Ovary (tissue), 10 donors: ENCODE measurements at regions of chr1 and their contacts with region 1.

Region 1: DNA sequence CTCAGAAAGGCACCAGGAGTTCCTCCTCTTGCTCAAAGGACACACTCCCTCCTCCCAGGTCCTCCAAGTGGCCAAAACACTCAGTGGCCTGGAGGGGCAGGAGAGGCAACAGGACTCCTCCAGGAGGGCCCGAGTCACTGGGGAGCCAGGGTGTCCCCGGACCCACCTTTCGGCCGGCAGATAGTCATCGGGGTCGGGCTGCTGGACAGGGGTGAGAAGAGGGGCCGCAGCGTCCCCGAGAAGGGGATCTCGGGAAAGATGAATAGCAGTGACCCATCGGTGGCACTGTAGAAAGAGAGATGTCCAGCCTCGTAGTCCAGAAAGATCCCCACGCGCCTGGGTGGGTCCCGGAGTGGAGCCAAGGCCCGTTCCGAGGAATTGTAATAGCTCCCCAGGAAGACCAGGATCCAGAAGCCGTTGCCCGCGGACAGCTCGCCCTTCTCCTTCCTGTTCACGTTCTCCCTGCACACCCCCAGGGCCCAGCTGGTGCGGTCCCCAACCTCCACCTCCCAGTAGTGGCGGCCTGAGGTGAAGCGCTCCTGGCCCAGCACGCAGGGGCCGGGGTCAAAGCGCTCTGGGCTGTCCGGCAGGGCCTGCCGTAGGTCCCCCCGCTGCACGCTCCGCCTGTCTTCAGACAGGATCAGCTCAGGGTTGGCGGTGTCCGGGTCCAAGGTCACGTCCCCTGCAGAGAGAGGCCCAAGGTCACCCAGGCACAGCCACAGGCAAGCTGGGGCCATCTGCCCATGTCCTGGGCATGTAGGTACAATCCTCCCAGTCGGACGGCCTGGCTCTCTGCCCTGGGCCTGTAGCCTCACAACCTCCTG is 11.9 kb downstream of the TRIM11 start:
- DNase-seq: peak in 3 of 5 donors; percentile 8 to 16 (median 16)
- H3K4me3 ChIP-seq: no peak overlapping the region
- H3K27ac ChIP-seq: no peak overlapping the region
- H3K4me1 ChIP-seq: no peaks in the 10 kb centered on the region
- H3K27me3 ChIP-seq: no peaks in the 10 kb centered on the region
- CTCF ChIP-seq: no peak
- EP300 ChIP-seq: no peak
- POLR2A ChIP-seq: no peak

Region 2: GRCh38 chr1:228050571-228051231 is 344.1 kb before region 1 on chr1:
- intact Hi-C with region 1: loop called in 1 of 4 experiments (anchors 5 kb)
- DNase-seq: peak in 1 of 5 donors; percentile 26
- H3K4me3 ChIP-seq: no peak overlapping the region
- H3K27ac ChIP-seq: no peak overlapping the region
- H3K4me1 ChIP-seq: no peaks in the 10 kb centered on the region
- H3K27me3 ChIP-seq: no peaks in the 10 kb centered on the region
- CTCF ChIP-seq: no peak
- EP300 ChIP-seq: no peak
- POLR2A ChIP-seq: no peak